Activated CD4-positive, alpha-beta memory T cell treated with anti-CD3 and anti-CD28 coated beads for 36 hours (primary cell): ENCODE measurements at regions of chr5 and their contacts with region 1.

Region 1: GRCh38 chr5:151126199-151126645 is 31.4 kb downstream of the ANXA6 start:
- DNase-seq: peak; percentile 74
- H3K4me3 Mint-ChIP-seq: no peak overlapping the region
- H3K27ac Mint-ChIP-seq: peak overlapping the region; percentile 90
- H3K4me1 Mint-ChIP-seq: peaks cover 64% of the 10 kb centered on the region
- H3K27me3 Mint-ChIP-seq: no peaks in the 10 kb centered on the region

Region 2: GRCh38 chr5:150774145-150774544 is 352.1 kb before region 1 on chr5:
- CTCF ChIA-PET with region 1: no interaction called
- POLR2A ChIA-PET with region 1: no interaction called
- intact Hi-C with region 1: no loop called
- DNase-seq: no peak
- H3K4me3 Mint-ChIP-seq: no peak overlapping the region
- H3K27ac Mint-ChIP-seq: no peak overlapping the region
- H3K4me1 Mint-ChIP-seq: peaks cover 16% of the 10 kb centered on the region
- H3K27me3 Mint-ChIP-seq: peaks cover 2% of the 10 kb centered on the region

Region 3: GRCh38 chr5:150978590-150978989 is 147.6 kb before region 1 on chr5:
- CTCF ChIA-PET with region 1: no interaction called
- POLR2A ChIA-PET with region 1: no interaction called
- intact Hi-C with region 1: no loop called
- DNase-seq: no peak
- H3K4me3 Mint-ChIP-seq: no peak overlapping the region
- H3K27ac Mint-ChIP-seq: no peak overlapping the region
- H3K4me1 Mint-ChIP-seq: no peaks in the 10 kb centered on the region
- H3K27me3 Mint-ChIP-seq: peaks cover 5% of the 10 kb centered on the region

Region 4: DNA sequence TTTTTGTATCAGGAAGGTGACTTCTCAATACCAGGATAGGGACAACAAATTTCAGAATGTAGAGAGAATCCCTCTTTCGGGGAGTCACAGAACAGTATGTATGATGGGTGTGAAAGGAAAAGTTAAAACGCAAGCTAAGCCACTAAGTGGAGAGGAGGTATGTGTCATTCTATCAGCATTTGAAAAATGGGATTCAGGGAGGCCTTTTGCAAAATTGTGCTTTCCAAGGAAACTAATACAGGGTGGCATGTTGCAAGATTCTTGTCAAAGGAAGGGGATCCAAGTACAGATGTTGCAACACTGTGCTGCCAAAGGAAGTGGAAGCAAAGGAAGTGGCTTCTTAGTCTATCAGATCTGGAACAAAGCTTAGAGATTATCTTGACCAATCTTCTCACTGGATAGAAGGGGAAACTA is 32.7 kb before region 1 on chr5:
- CTCF ChIA-PET with region 1: interaction called, 12 read pairs
- POLR2A ChIA-PET with region 1: no interaction called
- intact Hi-C with region 1: no loop called
- DNase-seq: no peak
- H3K4me3 Mint-ChIP-seq: peak overlapping the region; percentile 65
- H3K27ac Mint-ChIP-seq: peak overlapping the region; percentile 92
- H3K4me1 Mint-ChIP-seq: peaks cover 64% of the 10 kb centered on the region
- H3K27me3 Mint-ChIP-seq: no peaks in the 10 kb centered on the region

Region 5: GRCh38 chr5:151141535-151141934 is 15.3 kb after region 1 on chr5:
- CTCF ChIA-PET with region 1: interaction called, 118 read pairs
- POLR2A ChIA-PET with region 1: interaction called, 3 read pairs
- intact Hi-C with region 1: loop called (anchors 2 kb)
- DNase-seq: peak; percentile 84
- H3K4me3 Mint-ChIP-seq: peak overlapping the region; percentile 55
- H3K27ac Mint-ChIP-seq: peak overlapping the region; percentile 76
- H3K4me1 Mint-ChIP-seq: peaks cover 88% of the 10 kb centered on the region
- H3K27me3 Mint-ChIP-seq: no peaks in the 10 kb centered on the region

Region 6: DNA sequence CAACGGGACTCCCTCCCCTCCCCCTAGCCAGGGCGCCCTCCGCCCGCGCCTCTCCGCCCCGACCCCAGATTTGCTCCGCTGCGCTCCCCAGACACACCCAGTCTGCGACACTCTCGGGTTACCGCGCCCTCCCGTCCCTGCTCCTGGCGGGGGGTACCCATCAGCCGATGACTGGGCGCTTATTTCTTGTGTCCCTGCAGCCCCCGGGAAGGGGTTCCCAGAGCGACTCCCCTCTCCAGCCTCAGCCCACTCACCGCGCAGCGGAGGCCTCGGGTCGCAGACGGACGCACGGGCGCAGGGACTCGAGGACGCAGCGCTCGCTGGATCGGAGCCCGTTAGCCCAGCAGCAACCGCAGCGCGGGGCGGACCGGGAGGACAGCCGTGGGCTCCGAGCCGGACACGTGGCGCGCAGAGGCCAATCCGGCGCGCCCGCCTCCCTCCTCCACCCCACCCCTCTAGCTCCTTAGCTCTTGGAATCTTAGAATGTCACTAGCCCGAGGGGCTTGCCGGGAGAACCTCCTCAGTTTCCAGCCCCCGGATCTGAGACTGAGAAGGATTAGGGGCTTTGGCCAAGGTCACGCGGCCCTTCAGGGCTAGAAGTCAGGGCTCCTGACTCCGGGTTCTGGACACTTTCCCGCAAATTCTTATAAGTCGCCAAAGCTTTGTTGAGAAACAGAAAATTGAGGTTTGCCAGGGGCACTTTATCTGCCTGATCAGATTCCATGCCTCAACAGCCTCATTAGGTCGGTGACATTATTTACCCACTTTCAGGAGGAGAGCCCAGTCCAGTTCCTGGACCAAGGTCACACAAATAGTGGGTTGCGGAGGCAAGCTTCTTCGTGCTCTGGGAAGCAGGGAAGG is 31.4 kb after region 1 on chr5 and contains the start of gene ANXA6:
- CTCF ChIA-PET with region 1: interaction called, 553 read pairs
- POLR2A ChIA-PET with region 1: interaction called, 6 read pairs
- intact Hi-C with region 1: loop called (anchors 1 kb)
- DNase-seq: peak; percentile 80
- H3K4me3 Mint-ChIP-seq: peak within 1 kb of the TSS; percentile 97
- H3K27ac Mint-ChIP-seq: peak within 1 kb of the TSS; percentile 90
- H3K4me1 Mint-ChIP-seq: peaks cover 52% of the 10 kb centered on the region
- H3K27me3 Mint-ChIP-seq: no peaks in the 10 kb centered on the region
- total RNA-seq, gene ANXA6: 430 to 443 TPM

Region 7: GRCh38 chr5:151202381-151203139 is 76.3 kb after region 1 on chr5:
- CTCF ChIA-PET with region 1: interaction called, 16 read pairs
- POLR2A ChIA-PET with region 1: no interaction called
- intact Hi-C with region 1: no loop called
- DNase-seq: peak; percentile 76
- H3K4me3 Mint-ChIP-seq: no peak overlapping the region
- H3K27ac Mint-ChIP-seq: peak overlapping the region; percentile 83
- H3K4me1 Mint-ChIP-seq: peaks cover 29% of the 10 kb centered on the region
- H3K27me3 Mint-ChIP-seq: no peaks in the 10 kb centered on the region

Region 8: DNA sequence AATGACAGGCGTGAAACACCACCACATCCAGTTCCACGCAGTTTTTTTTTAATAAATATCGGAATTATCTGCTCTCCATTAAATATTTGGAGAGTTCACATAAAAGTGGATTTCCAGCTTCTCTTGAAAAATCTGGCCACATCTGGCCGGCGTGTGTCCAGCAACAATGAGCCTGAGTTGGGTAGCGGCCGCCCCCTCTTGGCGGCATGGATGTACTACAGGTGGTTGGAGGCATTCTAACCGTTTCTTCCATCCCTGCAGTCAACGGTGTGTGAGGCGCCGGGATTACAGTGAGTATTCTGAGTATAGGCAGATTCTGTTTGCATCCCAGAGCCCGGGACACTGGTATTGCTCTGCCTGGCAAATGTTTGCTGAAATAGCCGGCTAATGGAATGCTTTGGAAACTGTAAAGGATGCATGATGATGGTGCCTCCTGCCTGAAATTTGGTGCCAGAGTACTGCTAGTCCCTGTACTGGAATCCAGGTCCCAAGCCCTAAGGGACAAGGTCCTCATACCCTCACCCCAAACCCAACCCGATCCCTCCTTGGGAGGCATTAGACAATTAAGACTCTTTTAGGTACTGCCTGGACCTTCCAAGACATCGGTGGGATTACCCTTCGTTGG is 113.1 kb after region 1 on chr5:
- CTCF ChIA-PET with region 1: interaction called, 12 read pairs
- POLR2A ChIA-PET with region 1: interaction called, 3 read pairs
- intact Hi-C with region 1: loop called (anchors 1 kb)
- DNase-seq: peak; percentile 67
- H3K4me3 Mint-ChIP-seq: no peak overlapping the region
- H3K27ac Mint-ChIP-seq: no peak overlapping the region
- H3K4me1 Mint-ChIP-seq: peaks cover 26% of the 10 kb centered on the region
- H3K27me3 Mint-ChIP-seq: no peaks in the 10 kb centered on the region

Region 9: GRCh38 chr5:152472083-152472482 is 1345.9 kb after region 1 on chr5:
- CTCF ChIA-PET with region 1: no interaction called
- POLR2A ChIA-PET with region 1: no interaction called
- intact Hi-C with region 1: no loop called
- DNase-seq: no peak
- H3K4me3 Mint-ChIP-seq: no peak overlapping the region
- H3K27ac Mint-ChIP-seq: no peak overlapping the region
- H3K4me1 Mint-ChIP-seq: no peaks in the 10 kb centered on the region
- H3K27me3 Mint-ChIP-seq: peaks cover 5% of the 10 kb centered on the region